Right cardiac atrium (tissue), 5 donors: ENCODE measurements at regions of chr14 and their contacts with region 1.

Region 1: GRCh38 chr14:66403183-66403582 is 83.0 kb upstream of the CCDC196 start:
- DNase-seq: no peak
- ATAC-seq: peak; percentile 68 to 80
- H3K4me3 ChIP-seq: no peak overlapping the region
- H3K27ac ChIP-seq: no peak overlapping the region
- H3K4me1 ChIP-seq: no peaks in the 10 kb centered on the region
- H3K27me3 ChIP-seq: no peaks in the 10 kb centered on the region

Region 2: GRCh38 chr14:66359500-66359899 is 43.7 kb before region 1 on chr14:
- intact Hi-C with region 1: loop called in 1 of 4 experiments (anchors 2 kb)
- DNase-seq: no peak
- ATAC-seq: no peak
- H3K4me3 ChIP-seq: no peak overlapping the region
- H3K27ac ChIP-seq: no peak overlapping the region
- H3K4me1 ChIP-seq: no peaks in the 10 kb centered on the region
- H3K27me3 ChIP-seq: no peaks in the 10 kb centered on the region